OCI-LY7 (cell line): ENCODE measurements at regions of chr3 and their contacts with region 1.

Region 1: DNA sequence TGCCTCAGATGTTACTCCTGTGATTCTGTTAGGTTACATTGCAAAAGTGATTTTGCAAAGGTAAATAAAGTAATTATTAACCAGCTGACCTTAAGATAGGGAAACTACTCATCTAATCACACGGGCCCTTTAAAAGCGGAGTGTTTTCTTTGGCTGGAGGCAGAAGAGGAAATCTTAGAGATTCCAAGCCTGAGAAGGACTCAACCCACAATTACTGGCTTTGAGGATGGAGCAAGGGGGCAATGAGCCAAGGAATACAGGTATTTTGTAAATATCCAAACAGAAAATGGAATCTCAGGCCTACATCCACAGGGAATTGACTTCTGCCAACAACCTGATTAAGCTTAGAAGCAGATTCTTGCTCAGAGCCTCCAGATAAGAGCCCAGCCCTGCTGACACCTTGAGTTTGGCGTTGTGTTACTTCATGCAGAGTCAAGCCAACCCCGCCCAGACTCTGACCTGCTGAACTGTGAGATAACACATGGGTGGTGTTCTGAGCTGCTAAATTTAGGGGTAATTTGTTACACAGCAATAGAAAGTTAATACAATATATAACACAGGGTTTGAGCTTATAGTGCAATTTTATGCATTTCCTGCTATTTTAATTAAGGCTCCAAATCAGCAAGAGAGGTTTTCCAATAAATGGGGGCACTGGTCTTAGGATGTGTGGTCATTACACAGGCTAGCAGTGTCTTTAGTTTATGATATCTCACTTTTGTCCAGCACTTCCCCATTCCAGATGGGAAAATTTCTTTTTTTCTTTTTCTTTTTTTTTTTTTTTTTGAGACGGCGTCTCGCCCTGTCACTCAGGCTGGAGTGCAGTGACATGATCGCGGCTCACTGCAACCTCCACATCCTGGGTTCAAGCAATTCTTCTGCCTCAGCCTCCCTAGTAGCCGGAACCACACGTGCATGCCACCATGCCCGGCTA is 19.5 kb downstream of the NFKBIZ start:
- DNase-seq: no peak
- H3K4me3 ChIP-seq: no peak overlapping the region
- H3K27ac ChIP-seq: no peak overlapping the region
- H3K4me1 ChIP-seq: no peaks in the 10 kb centered on the region
- CTCF ChIP-seq: no peak

Region 2: DNA sequence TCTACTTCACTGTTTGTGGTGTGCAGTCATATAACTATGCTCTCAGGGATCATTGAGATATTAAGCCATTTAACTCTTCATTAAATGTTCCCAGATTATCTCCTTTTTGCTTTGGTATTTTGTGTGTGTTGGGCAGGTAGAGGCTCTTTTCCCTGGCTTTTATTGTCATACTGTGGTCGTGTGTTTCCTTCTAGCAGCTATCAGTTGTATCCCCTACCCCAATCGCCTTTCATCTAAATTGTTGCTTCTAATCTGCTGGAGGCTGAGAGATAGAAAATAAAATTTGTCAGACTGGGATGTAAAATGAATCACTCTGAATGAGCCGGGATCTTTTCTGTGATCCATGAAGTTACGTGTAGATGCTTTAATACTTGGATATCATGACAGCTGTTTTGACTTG is 10.3 kb before region 1 on chr3:
- CTCF ChIA-PET with region 1: interaction called, 3 read pairs
- POLR2A ChIA-PET with region 1: interaction called, 12 read pairs
- intact Hi-C with region 1: no loop called
- DNase-seq: no peak
- H3K4me3 ChIP-seq: no peak overlapping the region
- H3K27ac ChIP-seq: no peak overlapping the region
- H3K4me1 ChIP-seq: no peaks in the 10 kb centered on the region
- CTCF ChIP-seq: no peak

Region 3: DNA sequence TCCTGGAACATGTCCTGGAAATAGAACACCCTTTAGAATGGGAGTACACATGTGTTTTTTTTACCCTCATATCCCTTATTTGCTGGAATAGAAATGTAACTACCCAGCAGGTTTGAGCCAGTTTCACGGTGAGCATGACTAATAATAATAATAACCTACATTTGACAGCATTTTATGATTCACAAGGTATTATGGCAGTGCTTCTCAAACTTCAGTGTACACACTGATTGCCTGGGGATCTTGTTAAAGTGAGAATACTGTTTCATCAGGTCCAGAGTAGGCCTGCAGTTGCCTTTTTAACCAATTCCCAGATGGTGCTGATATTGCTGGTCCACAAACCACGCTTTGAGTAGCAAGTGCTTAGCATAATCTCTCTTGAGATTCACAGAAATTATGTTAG is 44.4 kb after region 1 on chr3:
- CTCF ChIA-PET with region 1: no interaction called
- POLR2A ChIA-PET with region 1: no interaction called
- intact Hi-C with region 1: no loop called
- DNase-seq: no peak
- H3K4me3 ChIP-seq: no peak overlapping the region
- H3K27ac ChIP-seq: no peak overlapping the region
- H3K4me1 ChIP-seq: no peaks in the 10 kb centered on the region
- CTCF ChIP-seq: no peak